Head of caudate nucleus (tissue), 42 donors: ENCODE measurements at regions of chr15 and their contacts with region 1.

Region 1: GRCh38 chr15:101307048-101307896 is 12.2 kb upstream of the SNRPA1 start:
- DNase-seq: peak in 29 of 42 donors; percentile 10 to 79 (median 44)

Region 2: GRCh38 chr15:101167753-101168463 is 139.4 kb before region 1 on chr15:
- intact Hi-C with region 1: no loop called
- DNase-seq: peak in 25 of 42 donors; percentile 16 to 70 (median 38)

Region 3: GRCh38 chr15:101499863-101500713 is 192.8 kb after region 1 on chr15:
- intact Hi-C with region 1: loop called (anchors 10 kb)
- DNase-seq: peak in 21 of 42 donors; percentile 42 to 79 (median 59)